SK-N-SH (cell line): ENCODE measurements at regions of chr15 and their contacts with region 1.

Region 1: GRCh38 chr15:89485855-89486361 is 10.5 kb downstream of the RHCG start:
- DNase-seq: no peak
- H3K4me3 ChIP-seq: no peak overlapping the region
- H3K27ac ChIP-seq: no peak overlapping the region
- H3K4me1 ChIP-seq: peaks cover 0 to 2% of the 10 kb centered on the region in 2 experiments; a peak in 1 of 4 replicates
- H3K27me3 ChIP-seq: no peaks in the 10 kb centered on the region
- CTCF ChIP-seq: no peak
- EP300 ChIP-seq: no peak
- RAD21 ChIP-seq: no peak

Region 2: DNA sequence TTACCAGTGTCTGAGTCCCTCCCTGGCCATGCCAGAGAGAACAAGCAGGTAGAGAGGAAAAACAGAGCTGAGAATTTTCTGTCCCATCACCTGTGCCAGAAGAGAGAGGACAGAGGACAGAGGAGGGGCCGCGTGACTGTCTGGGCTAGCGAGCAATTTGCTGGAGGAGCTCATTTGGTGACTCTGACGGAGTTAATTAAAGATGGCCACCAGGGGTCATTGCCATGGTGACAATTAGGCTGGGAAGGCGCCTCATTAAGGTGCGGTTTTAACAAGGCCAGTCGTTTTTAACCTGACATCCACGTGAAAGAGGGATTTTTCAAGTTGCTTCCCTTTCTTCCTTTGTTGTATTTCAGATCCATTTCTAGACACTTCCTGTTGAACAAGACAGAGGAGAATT is 61.9 kb before region 1 on chr15:
- CTCF ChIA-PET with region 1: no interaction called
- POLR2A ChIA-PET with region 1: no interaction called
- DNase-seq: no peak
- H3K4me3 ChIP-seq: no peak overlapping the region
- H3K27ac ChIP-seq: no peak overlapping the region
- H3K4me1 ChIP-seq: no peaks in the 10 kb centered on the region; a peak in 1 of 4 replicates
- H3K27me3 ChIP-seq: no peaks in the 10 kb centered on the region
- CTCF ChIP-seq: no peak
- EP300 ChIP-seq: no peak
- RAD21 ChIP-seq: no peak

Region 3: DNA sequence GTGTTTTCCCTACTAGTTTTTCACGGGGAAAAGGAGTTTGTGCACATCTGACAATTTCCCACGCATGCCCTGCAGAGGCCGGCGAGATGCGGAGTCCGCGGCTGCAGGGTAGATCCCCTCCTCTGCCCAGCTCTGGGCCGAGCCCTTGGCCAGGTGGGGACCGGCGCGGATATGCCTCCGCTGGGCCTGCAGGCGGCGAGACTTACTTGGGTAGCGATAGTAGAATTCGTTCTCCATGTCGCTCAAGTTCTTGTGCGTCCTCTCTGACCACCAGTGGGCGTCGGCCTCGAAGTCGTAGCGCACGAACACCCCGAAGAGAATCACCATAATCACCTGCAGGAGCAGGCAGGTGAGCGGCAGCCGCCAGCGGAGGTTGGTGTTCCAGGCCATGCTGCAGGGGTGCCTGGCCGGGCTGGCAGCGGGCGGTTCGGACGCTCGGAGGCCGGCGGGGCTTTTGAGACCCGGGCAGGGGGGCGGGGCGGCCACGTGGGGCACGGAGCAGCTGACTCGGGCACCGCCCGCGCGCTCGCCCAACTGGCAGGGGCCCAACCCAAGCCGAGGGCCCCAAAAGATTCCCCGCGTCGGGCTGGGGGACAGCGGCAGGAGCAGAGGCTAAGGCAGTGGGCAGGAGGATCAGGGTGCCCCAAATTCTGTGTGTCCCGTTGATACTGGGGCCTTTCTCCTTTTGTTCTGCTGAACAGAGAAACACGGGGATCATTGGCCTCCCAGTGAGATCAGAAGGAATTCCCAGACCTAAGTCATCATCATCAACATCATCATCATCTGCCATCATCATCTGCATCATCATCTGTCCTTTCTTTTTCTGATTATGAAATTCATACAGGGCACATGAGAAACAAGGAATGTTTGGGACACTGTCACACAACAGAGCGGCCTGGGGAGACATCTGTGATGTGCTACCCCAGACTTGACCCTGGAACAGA is 10.5 kb after region 1 on chr15 and contains the start of gene RHCG:
- CTCF ChIA-PET with region 1: interaction called, 10 read pairs
- POLR2A ChIA-PET with region 1: no interaction called
- DNase-seq: peak; percentile 61
- H3K4me3 ChIP-seq: peak within 1 kb of the TSS; percentile 14 to 46; a peak in 2 of 4 replicates
- H3K27ac ChIP-seq: no peak within 1 kb of the TSS
- H3K4me1 ChIP-seq: peaks cover 0 to 8% of the 10 kb centered on the region in 2 experiments; a peak in 1 of 4 replicates
- H3K27me3 ChIP-seq: no peaks in the 10 kb centered on the region
- CTCF ChIP-seq: peak; percentile 15; the same call in 1 of the 2 replicates
- EP300 ChIP-seq: no peak
- RAD21 ChIP-seq: no peak
- polyA plus RNA-seq, gene RHCG: not detected in 2 replicates

Region 4: DNA sequence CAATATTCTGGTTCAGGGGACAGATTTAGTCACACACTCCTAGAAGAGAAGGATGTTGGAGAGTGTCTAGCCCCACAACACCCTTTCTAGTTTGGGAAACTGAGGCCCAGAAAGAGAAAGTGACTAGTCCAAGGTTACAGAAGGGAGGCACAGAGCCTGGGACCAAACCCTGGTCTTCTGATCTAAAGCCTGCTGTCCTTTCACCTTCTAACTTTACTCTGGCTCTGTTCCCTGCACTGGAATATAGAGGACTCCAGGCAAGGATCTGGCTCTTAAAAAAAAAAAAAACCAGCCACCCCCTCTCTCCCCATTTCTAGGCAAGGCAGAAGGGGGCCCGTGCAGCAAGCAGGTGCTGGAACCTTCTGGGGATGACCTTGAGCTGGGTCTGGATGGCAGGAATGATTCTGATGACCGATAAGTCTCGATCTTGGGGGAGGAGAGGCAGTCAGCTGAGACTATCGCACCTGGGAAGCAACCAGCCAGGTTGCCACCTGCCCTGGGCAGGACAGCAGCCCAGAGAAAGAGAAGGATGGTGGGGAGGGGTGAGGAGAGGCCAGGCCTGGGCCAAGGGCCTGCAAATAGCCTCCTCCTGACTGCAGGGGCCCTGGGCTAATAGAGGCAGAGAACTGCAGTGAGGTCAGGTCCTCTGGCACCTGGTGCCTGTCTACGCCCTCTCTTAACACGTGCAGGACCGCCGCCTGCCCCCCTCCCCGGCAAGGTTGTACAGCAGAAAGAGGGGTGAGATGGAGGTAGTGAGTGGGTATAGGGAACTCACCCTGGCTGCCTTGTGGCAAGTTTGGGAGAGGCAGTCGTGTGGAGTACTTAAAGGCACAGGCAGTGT is 40.9 kb after region 1 on chr15:
- CTCF ChIA-PET with region 1: no interaction called
- POLR2A ChIA-PET with region 1: no interaction called
- DNase-seq: no peak
- H3K4me3 ChIP-seq: no peak overlapping the region
- H3K27ac ChIP-seq: no peak overlapping the region
- H3K4me1 ChIP-seq: no peaks in the 10 kb centered on the region
- H3K27me3 ChIP-seq: no peaks in the 10 kb centered on the region; the same call in 1 of the 2 replicates
- CTCF ChIP-seq: no peak
- EP300 ChIP-seq: no peak
- RAD21 ChIP-seq: no peak